ENCODE measurements at regions of chr11 and their contacts with region 1.

Region 1: GRCh38 chr11:44936525-44936924 is 14.2 kb downstream of the TP53I11 start:
- DNase-seq: peak; percentile 82 to 89
- H3K4me3 ChIP-seq: no peak overlapping the region
- H3K27ac ChIP-seq: no peak overlapping the region
- H3K4me1 ChIP-seq: peaks cover 0 to 15% (median 5%) of the 10 kb centered on the region in 4 donors
- H3K27me3 ChIP-seq: no peaks in the 10 kb centered on the region
- CTCF ChIP-seq: peak; percentile 97 to 98

Region 2: GRCh38 chr11:44519989-44520737 is 416.4 kb before region 1 on chr11:
- intact Hi-C with region 1: no loop called
- DNase-seq: peak in 1 of 2 donors; percentile 25
- H3K4me3 ChIP-seq: no peak overlapping the region
- H3K27ac ChIP-seq: no peak overlapping the region
- H3K4me1 ChIP-seq: no peaks in the 10 kb centered on the region
- H3K27me3 ChIP-seq: peaks cover 0 to 26% of the 10 kb centered on the region in 2 donors
- CTCF ChIP-seq: no peak

Region 3: DNA sequence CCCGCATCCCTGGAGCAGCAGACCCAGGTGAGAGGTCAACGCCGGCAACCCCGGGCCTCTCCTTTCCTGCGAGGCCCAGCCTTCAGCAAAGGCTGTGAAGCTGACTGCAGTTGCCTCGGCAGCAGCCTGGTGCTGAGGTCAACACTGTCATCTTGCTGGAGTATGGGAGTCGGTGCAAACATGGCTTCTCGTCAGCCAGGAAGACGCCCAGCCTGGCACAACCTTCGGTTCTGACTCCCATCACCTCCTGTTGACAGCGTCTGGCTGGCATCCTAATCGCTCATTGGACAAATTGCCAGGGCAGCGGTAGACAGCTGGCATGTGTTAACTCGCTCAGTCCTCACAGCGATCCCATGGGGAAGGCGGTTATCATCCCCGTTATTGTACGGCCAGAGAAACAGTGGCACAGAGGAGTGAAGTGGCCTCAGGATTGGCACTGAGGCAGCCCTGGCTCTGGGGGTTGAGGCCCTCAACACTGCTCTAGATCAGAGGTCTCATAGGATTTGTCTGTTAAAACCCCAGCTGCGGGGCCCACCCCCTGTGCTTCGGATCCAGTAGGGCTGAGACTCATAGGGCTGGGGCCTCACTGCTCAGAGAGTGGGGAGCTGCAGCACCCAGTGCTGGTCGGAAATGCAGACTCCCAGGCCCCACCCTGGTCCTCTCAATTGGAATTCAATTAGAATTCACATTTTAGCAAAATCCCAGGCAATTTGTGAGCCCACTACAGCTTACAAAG is 53.5 kb after region 1 on chr11:
- intact Hi-C with region 1: no loop called
- DNase-seq: peak in 1 of 2 donors; percentile 82
- H3K4me3 ChIP-seq: no peak overlapping the region
- H3K27ac ChIP-seq: peak overlapping the region in 1 of 2 donors; percentile 16
- H3K4me1 ChIP-seq: peaks cover 0 to 27% (median 17%) of the 10 kb centered on the region in 4 donors
- H3K27me3 ChIP-seq: peaks cover 0 to 5% of the 10 kb centered on the region in 2 donors
- CTCF ChIP-seq: no peak

Region 4: GRCh38 chr11:45102810-45103621 is 166.5 kb after region 1 on chr11:
- intact Hi-C with region 1: loop called (anchors 1 kb)
- DNase-seq: no peak
- H3K4me3 ChIP-seq: no peak overlapping the region
- H3K27ac ChIP-seq: no peak overlapping the region
- H3K4me1 ChIP-seq: peaks cover 0 to 19% (median 6%) of the 10 kb centered on the region in 4 donors
- H3K27me3 ChIP-seq: peaks cover 0 to 14% of the 10 kb centered on the region in 2 donors
- CTCF ChIP-seq: peak; percentile 93 to 97

Region 5: GRCh38 chr11:45158198-45158731 is 221.7 kb after region 1 on chr11:
- intact Hi-C with region 1: no loop called
- DNase-seq: peak in 1 of 2 donors; percentile 68
- H3K4me3 ChIP-seq: no peak overlapping the region
- H3K27ac ChIP-seq: peak overlapping the region; percentile 74 to 79
- H3K4me1 ChIP-seq: peaks cover 5 to 90% (median 71%) of the 10 kb centered on the region in 4 donors
- H3K27me3 ChIP-seq: no peaks in the 10 kb centered on the region
- CTCF ChIP-seq: no peak

Region 6: DNA sequence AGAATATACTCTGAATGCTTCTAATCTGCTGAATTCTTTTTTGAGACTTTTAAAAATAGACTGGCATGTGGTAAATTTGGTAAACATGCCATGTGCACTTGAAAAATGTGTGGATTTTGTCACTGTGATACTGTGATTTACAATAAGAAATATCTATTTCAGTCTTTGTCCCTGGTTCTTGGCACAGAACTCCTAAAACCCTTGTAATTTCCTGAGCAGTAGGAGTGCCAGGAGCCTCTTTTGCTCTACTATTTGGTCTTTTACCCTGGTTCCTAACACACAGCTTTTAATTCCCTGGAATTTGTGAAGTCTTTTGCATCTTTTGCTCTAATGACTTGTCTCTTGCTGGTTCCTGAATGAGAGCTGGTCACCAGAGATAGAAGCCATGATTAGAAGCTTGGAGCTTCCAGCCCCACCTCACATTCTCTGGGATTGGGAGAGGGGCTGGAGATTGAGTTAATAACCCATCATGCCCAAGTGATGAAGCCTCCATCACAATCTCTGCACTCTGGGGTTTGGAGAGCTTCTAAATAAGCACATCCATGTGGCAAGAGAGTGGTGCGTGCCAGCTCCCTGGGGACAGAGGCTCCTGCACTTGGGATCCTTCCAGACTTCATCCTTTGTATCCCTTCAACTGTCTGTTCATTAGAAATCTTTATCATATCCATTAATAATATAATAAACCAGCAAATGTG is 376.8 kb after region 1 on chr11:
- intact Hi-C with region 1: no loop called
- DNase-seq: peak in 1 of 2 donors; percentile 5
- H3K4me3 ChIP-seq: no peak overlapping the region
- H3K27ac ChIP-seq: no peak overlapping the region
- H3K4me1 ChIP-seq: peaks cover 0 to 16% (median 2%) of the 10 kb centered on the region in 4 donors
- H3K27me3 ChIP-seq: no peaks in the 10 kb centered on the region
- CTCF ChIP-seq: no peak

Measured in tibial artery (tissue), 4 donors.